BJ (cell line): ENCODE measurements at regions of chr1 and their contacts with region 1.

Region 1: GRCh38 chr1:28642847-28643635 is at the start of gene TAF12:
- DNase-seq: peak; percentile 85
- H3K4me3 ChIP-seq: peak within 1 kb of the TSS; percentile 71
- H3K27me3 ChIP-seq: no peaks in the 10 kb centered on the region
- CTCF ChIP-seq: peak; percentile 36
- polyA plus RNA-seq, gene TAF12: 31.8 and 46.8 TPM in 2 replicates

Region 2: DNA sequence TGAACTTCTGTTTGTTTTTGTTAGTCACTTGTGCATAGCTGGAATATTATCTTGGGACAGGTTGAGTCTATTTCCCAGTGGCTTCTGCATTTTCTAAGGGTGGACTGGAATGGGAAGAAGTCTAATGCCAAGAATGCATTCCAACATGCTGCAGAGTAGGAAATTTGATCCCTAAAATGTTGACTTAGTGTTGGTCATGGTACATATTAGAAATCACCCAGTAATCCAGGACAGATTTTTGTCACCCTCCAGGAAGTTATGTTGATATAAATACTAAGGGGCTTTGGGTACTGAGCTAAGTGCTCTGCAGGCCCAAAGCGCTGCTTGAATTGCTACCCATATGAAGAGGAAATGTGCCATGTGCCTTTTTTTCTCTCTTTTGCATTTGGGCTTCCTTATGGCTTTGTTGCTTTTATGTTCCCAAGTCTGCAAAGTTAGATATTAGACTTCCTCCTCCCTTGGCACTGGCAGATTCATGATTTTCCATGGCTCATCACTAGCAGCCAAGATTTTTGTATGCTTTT is 1937.2 kb before region 1 on chr1:
- CTCF ChIA-PET with region 1: no interaction called
- POLR2A ChIA-PET with region 1: interaction called, 14 read pairs
- DNase-seq: peak; percentile 90
- H3K4me3 ChIP-seq: no peak overlapping the region
- H3K27me3 ChIP-seq: no peaks in the 10 kb centered on the region
- CTCF ChIP-seq: no peak

Region 3: GRCh38 chr1:28369371-28370238 is 273.4 kb before region 1 on chr1 and contains the start of gene PHACTR4:
- CTCF ChIA-PET with region 1: no interaction called
- POLR2A ChIA-PET with region 1: interaction called, 12 read pairs
- DNase-seq: peak; percentile 48
- H3K4me3 ChIP-seq: peak within 1 kb of the TSS; percentile 63
- H3K27me3 ChIP-seq: no peaks in the 10 kb centered on the region
- CTCF ChIP-seq: no peak
- polyA plus RNA-seq, gene PHACTR4: 5.2 and 9.1 TPM in 2 replicates

Region 4: GRCh38 chr1:28682840-28683239 is 39.8 kb after region 1 on chr1:
- CTCF ChIA-PET with region 1: no interaction called
- POLR2A ChIA-PET with region 1: interaction called, 14 read pairs
- DNase-seq: no peak
- H3K4me3 ChIP-seq: no peak overlapping the region
- H3K27me3 ChIP-seq: no peaks in the 10 kb centered on the region
- CTCF ChIP-seq: no peak

Region 5: DNA sequence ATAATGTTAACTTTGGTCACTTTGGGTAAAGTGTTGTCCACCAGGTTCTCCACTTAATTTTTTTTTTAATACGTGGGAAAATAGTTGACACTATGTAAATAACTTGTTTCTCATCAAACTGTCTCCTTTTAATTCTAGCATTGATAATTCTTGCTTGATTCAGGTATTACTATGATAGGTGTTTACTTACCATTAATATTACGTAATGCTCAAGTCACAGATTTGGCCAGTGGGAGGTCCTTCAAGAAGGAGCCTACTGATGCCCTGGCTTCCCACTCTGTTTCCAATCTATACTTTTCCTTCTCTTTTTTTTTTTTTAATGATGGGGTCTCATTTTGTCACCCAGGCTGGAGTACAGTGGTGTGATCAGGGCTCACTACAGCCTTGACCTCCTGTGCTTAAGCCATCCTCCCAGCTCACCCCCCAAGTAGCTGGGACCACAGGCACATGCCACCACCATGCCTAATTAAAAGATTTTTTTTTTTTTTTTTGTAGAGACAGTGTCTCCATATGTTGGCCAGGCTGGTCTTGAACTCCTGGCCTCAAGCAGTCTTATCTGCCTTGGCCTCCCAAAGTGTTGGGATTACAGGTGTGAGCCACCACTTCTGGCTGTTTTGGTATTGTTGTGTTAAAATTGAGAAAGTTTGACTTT is 123.6 kb after region 1 on chr1:
- CTCF ChIA-PET with region 1: interaction called, 3 read pairs
- POLR2A ChIA-PET with region 1: interaction called, 16 read pairs
- DNase-seq: no peak
- H3K4me3 ChIP-seq: no peak overlapping the region
- H3K27me3 ChIP-seq: no peaks in the 10 kb centered on the region
- CTCF ChIP-seq: no peak